Activated CD4-positive, alpha-beta T cell treated with anti-CD3 and anti-CD28 coated beads, Interleukin-2, amount 10 ng/mL, durations not matched to agents 24 days and 14 days (primary cell): ENCODE measurements at regions of chr7 and their contacts with region 1.

Region 1: DNA sequence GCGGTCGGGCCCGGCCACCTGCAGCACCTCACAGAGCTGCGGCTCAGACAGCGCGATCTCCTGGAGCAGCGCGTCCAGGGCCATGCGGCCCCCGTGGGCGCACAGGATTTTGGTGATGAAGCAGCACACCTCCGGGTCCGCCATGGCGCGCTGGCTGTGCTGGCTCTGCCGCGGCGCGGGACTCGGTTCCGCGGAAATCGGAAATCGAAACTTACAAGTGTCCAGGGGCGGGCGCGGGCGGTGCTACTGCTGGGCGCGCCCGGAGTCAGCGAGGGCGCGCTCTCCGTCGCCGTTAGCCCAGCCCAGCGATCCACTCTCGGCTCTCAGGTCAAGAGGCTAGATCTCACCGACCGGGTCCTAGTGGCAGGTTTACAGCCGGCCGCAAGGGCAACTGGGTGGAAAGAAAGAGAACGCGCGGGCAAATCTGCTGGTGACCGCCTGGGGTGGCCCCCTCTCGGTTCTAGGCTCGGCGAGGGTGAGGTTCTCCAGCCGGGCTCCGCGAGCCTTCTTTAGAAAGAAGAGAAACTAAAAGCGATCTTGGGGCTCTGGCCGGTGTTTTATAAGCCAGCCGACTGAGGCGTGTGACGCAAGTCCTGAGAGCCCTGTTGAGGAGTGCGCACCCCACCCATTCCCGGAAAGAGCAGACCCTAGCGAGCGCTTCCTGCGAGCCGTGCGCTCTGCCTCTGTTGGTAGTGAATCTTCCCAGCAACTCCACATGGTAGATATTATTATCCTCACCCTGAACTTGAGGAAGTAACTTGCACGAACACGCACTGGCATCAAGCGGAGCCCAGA is at the start of gene ZC3HAV1:
- DNase-seq: peak; percentile 97
- H3K4me3 Mint-ChIP-seq: peak within 1 kb of the TSS; percentile 97
- H3K27ac Mint-ChIP-seq: peak within 1 kb of the TSS; percentile 92
- H3K4me1 Mint-ChIP-seq: peaks cover 24% of the 10 kb centered on the region
- H3K27me3 Mint-ChIP-seq: no peaks in the 10 kb centered on the region
- total RNA-seq, gene ZC3HAV1: 86.1 and 90.5 TPM in 2 replicates

Region 2: DNA sequence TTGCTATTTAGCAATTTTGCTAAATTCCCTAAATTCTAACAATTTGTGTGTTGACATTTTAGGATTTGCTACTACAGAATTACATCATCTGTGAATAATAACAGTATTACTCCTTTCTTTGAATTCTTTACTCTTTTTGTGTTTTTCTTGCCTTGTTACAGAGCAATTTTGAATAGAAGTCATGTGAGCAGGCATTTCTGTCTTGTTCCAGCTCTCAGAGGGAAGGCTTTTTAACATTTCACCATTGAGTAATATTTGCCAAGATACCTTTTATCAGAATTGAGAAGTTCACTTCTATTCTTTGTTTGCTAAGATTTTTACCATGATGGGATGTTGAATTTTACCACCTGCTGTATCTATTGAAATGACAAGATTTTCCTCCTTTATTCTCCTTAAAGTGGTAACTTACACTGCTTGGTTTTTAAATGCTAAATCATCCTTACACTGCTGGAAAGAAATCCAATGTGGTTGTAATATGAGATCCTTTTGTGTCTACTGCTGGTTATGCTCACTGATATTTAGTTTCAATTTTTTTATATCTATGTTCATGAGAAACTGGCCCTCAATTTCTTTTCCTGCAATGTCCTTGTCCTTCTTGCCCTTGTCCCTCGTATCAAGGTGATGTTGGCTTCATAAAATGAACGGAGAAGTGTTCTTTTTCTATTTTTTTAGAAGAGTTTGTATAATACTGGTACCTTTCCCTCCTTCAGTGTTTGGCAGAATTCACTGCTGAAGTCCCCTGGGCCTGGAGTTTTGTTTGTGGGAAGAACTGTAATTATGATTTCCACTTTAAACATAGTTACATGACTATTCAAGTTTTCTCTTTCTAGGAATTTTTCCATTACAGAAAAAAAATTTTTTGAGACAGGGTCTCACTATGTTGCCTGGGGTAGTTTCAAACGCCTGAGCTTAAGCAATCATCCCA is 261.1 kb before region 1 on chr7:
- intact Hi-C with region 1: no loop called
- DNase-seq: no peak
- H3K4me3 Mint-ChIP-seq: no peak overlapping the region
- H3K27ac Mint-ChIP-seq: no peak overlapping the region
- H3K4me1 Mint-ChIP-seq: peaks cover under 1% of the 10 kb centered on the region
- H3K27me3 Mint-ChIP-seq: peaks cover 29% of the 10 kb centered on the region

Region 3: GRCh38 chr7:138962550-138963241 is 146.7 kb before region 1 on chr7:
- intact Hi-C with region 1: no loop called
- DNase-seq: no peak
- H3K4me3 Mint-ChIP-seq: no peak overlapping the region
- H3K27ac Mint-ChIP-seq: no peak overlapping the region
- H3K4me1 Mint-ChIP-seq: peaks cover 7% of the 10 kb centered on the region
- H3K27me3 Mint-ChIP-seq: peaks cover 19% of the 10 kb centered on the region

Region 4: GRCh38 chr7:139004321-139005075 is 104.9 kb before region 1 on chr7:
- intact Hi-C with region 1: no loop called
- DNase-seq: no peak
- H3K4me3 Mint-ChIP-seq: no peak overlapping the region
- H3K27ac Mint-ChIP-seq: no peak overlapping the region
- H3K4me1 Mint-ChIP-seq: peaks cover under 1% of the 10 kb centered on the region
- H3K27me3 Mint-ChIP-seq: peaks cover 6% of the 10 kb centered on the region

Region 5: GRCh38 chr7:139095194-139095659 is 14.2 kb before region 1 on chr7:
- intact Hi-C with region 1: loop called (anchors 1 kb)
- DNase-seq: peak; percentile 96
- H3K4me3 Mint-ChIP-seq: peak overlapping the region; percentile 82
- H3K27ac Mint-ChIP-seq: peak overlapping the region; percentile 88
- H3K4me1 Mint-ChIP-seq: peaks cover 76% of the 10 kb centered on the region
- H3K27me3 Mint-ChIP-seq: no peaks in the 10 kb centered on the region

Region 6: GRCh38 chr7:139230774-139231512 is 121.6 kb after region 1 on chr7 and contains the start of gene UBN2:
- intact Hi-C with region 1: loop called (anchors 1 kb)
- DNase-seq: peak; percentile 97
- H3K4me3 Mint-ChIP-seq: peak within 1 kb of the TSS; percentile 98
- H3K27ac Mint-ChIP-seq: peak within 1 kb of the TSS; percentile 97
- H3K4me1 Mint-ChIP-seq: peaks cover 20% of the 10 kb centered on the region
- H3K27me3 Mint-ChIP-seq: peaks cover 21% of the 10 kb centered on the region
- total RNA-seq, gene UBN2: 12.5 and 15.2 TPM in 2 replicates